ENCODE measurements at regions of chr1 and their contacts with region 1.

Region 1: GRCh38 chr1:35564037-35564883 is 6.7 kb downstream of the NCDN start:
- DNase-seq: peak; percentile 71
- H3K4me3 ChIP-seq: no peak overlapping the region
- H3K27ac ChIP-seq: no peak overlapping the region
- H3K4me1 ChIP-seq: peaks cover 29% of the 10 kb centered on the region
- H3K27me3 ChIP-seq: no peaks in the 10 kb centered on the region
- CTCF ChIP-seq: peak; percentile 73 to 89

Region 2: GRCh38 chr1:34896613-34897012 is 667.6 kb before region 1 on chr1:
- CTCF ChIA-PET with region 1: no interaction called
- dilution Hi-C with region 1: no loop called
- in situ Hi-C with region 1: no loop called
- intact Hi-C with region 1: loop called (anchors 10 kb)
- DNase-seq: no peak
- H3K4me3 ChIP-seq: no peak overlapping the region
- H3K27ac ChIP-seq: no peak overlapping the region
- H3K4me1 ChIP-seq: no peaks in the 10 kb centered on the region
- H3K27me3 ChIP-seq: no peaks in the 10 kb centered on the region
- CTCF ChIP-seq: no peak

Region 3: GRCh38 chr1:35202048-35202719 is 362.1 kb before region 1 on chr1:
- CTCF ChIA-PET with region 1: no interaction called
- dilution Hi-C with region 1: no loop called
- in situ Hi-C with region 1: loop called in 1 of 2 experiments (anchors 10 kb)
- intact Hi-C with region 1: loop called (anchors 1 kb)
- DNase-seq: peak; percentile 70
- H3K4me3 ChIP-seq: no peak overlapping the region
- H3K27ac ChIP-seq: no peak overlapping the region
- H3K4me1 ChIP-seq: no peaks in the 10 kb centered on the region
- H3K27me3 ChIP-seq: no peaks in the 10 kb centered on the region
- CTCF ChIP-seq: peak; percentile 86 to 93

Region 4: GRCh38 chr1:35532497-35533223 is 31.6 kb before region 1 on chr1:
- CTCF ChIA-PET with region 1: no interaction called
- dilution Hi-C with region 1: loop called (anchors 5 kb)
- in situ Hi-C with region 1: no loop called
- intact Hi-C with region 1: no loop called
- DNase-seq: no peak
- H3K4me3 ChIP-seq: no peak overlapping the region
- H3K27ac ChIP-seq: no peak overlapping the region
- H3K4me1 ChIP-seq: no peaks in the 10 kb centered on the region
- H3K27me3 ChIP-seq: no peaks in the 10 kb centered on the region
- CTCF ChIP-seq: no peak

Region 5: GRCh38 chr1:35726450-35727433 is 162.5 kb after region 1 on chr1:
- CTCF ChIA-PET with region 1: interaction called, 3 read pairs
- dilution Hi-C with region 1: loop called (anchors 5 kb)
- in situ Hi-C with region 1: loop called in 1 of 2 experiments (anchors 5 kb)
- intact Hi-C with region 1: loop called (anchors 1 kb)
- DNase-seq: peak; percentile 22
- H3K4me3 ChIP-seq: no peak overlapping the region
- H3K27ac ChIP-seq: no peak overlapping the region
- H3K4me1 ChIP-seq: no peaks in the 10 kb centered on the region
- H3K27me3 ChIP-seq: no peaks in the 10 kb centered on the region
- CTCF ChIP-seq: peak; percentile 87 to 89